CD8-positive, alpha-beta T cell (primary cell): ENCODE measurements at regions of chr16 and their contacts with region 1.

Region 1: GRCh38 chr16:50195276-50195675 is 42.2 kb downstream of the TENT4B start:
- DNase-seq: no peak
- ATAC-seq: no peak
- H3K4me3 ChIP-seq: no peak overlapping the region
- H3K4me3 Mint-ChIP-seq: no peak overlapping the region
- H3K27ac ChIP-seq: peak overlapping the region in 1 of 2 experiments; percentile 24
- H3K27ac Mint-ChIP-seq: peak overlapping the region; percentile 14
- H3K4me1 ChIP-seq: peaks cover 26% of the 10 kb centered on the region
- H3K4me1 Mint-ChIP-seq: peaks cover 72% of the 10 kb centered on the region
- H3K27me3 ChIP-seq: no peaks in the 10 kb centered on the region
- H3K27me3 Mint-ChIP-seq: no peaks in the 10 kb centered on the region
- CTCF ChIP-seq: no peak

Region 2: GRCh38 chr16:50160495-50161164 is 34.6 kb before region 1 on chr16:
- CTCF ChIA-PET with region 1: no interaction called
- POLR2A ChIA-PET with region 1: interaction called, 4 read pairs
- intact Hi-C with region 1: loop called in 1 of 2 experiments (anchors 5 kb)
- DNase-seq: peak in 2 of 9 experiments; percentile 60 to 81
- ATAC-seq: peak; percentile 80
- H3K4me3 ChIP-seq: no peak overlapping the region
- H3K4me3 Mint-ChIP-seq: peak overlapping the region; percentile 46
- H3K27ac ChIP-seq: peak overlapping the region; percentile 24 to 50
- H3K27ac Mint-ChIP-seq: peak overlapping the region; percentile 84
- H3K4me1 ChIP-seq: peaks cover 66% of the 10 kb centered on the region
- H3K4me1 Mint-ChIP-seq: peaks cover 67% of the 10 kb centered on the region
- H3K27me3 ChIP-seq: no peaks in the 10 kb centered on the region
- H3K27me3 Mint-ChIP-seq: no peaks in the 10 kb centered on the region
- CTCF ChIP-seq: no peak